HepG2 (cell line): ENCODE measurements at regions of chr20 and their contacts with region 1.

Region 1: DNA sequence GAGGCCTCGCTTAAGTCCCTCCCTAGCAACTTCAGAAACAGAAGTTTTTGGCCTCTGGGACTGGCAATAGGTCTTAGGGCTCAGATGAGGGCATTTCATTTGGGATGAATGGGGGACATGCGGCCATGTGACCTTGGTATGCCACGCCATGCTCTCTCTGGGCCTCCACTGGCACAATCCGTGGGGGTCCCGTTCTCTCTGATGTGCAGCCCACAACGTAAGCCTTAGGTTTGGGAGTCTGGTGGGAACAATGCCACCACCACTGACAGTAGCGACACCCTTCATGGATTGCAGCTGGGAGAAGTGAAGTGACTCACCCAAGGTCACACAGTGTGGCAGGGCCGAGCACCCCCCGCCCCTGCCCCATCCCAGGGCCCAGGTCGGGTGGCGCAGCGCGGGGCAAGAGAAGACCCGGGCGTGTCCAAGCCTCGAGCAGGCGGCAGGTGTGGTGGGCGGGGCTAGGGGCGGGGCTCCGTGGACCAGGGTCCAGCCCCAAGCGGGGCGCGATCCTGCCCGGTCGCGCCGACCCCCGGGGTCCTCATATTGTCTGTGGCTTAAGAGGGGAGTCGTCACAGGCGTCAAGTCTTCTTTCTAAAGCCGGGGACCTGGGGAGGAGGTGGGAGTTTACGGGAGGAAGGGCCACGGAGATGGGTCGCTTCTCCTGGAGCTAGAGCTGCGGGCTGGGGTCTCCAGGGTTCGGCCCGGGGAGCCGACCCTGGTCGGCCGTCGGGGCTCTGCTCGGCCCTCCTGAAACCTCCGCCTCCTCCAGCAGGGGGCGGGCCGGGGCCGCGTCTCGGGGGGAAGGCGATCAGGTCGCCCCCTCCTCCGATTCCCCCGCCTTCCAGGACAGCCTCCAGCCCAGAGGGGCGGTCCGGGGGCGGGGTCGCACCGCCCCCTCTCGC is 698 bp upstream of the CEBPB start:
- DNase-seq: peak; percentile 90
- ATAC-seq: peak; percentile 53
- H3K4me3 ChIP-seq: peak overlapping the region; percentile 80 to 99 (median 95)
- H3K27ac ChIP-seq: peak overlapping the region; percentile 79
- H3K4me1 ChIP-seq: peaks cover 66% of the 10 kb centered on the region
- H3K27me3 ChIP-seq: no peaks in the 10 kb centered on the region; a peak in 1 of 5 replicates
- CTCF ChIP-seq: peak; percentile 96
- EP300 ChIP-seq: peak in 1 of 2 experiments; percentile 31; a peak in 1 of 4 replicates
- POLR2A ChIP-seq: no peak
- RAD21 ChIP-seq: peak; percentile 96

Region 2: DNA sequence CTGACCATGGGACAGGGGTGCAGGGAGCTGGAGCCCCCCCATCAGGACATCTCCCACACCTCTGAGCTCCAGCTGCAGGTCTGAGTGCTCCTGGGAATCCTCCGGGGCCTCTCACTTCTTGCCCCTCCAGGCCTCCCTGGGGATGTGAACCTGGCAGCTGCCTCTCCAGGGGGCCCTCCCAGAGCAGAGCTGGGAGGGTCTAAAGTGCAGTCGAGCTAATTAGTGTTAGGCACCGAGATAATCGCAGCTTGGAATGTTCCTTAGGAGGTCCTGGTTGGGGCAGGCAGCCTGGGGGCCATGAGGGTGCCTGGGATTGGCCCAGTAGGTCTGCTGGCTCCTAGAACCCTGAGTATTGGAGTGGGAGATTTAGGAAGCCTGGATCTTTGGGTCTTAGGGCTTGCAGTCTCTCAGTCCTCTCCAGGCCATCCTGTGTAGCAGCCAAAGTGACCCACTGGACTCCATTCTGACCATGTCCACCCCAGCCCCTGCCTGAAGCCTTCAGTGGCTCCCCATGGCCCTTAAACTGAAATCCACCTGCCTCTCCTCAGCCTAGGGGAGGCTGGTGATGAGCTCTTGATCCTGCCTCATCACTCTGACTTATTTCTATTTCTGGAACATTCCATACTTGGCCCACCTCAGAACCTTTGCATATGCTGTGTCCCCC is 26.7 kb after region 1 on chr20:
- CTCF ChIA-PET with region 1: no interaction called
- POLR2A ChIA-PET with region 1: interaction called, 10 read pairs
- in situ Hi-C with region 1: no loop called
- intact Hi-C with region 1: no loop called
- DNase-seq: peak; percentile 63
- ATAC-seq: peak; percentile 59
- H3K4me3 ChIP-seq: peak overlapping the region in 2 of 3 experiments; percentile 7 to 63; a peak in 3 of 6 replicates
- H3K27ac ChIP-seq: no peak overlapping the region
- H3K4me1 ChIP-seq: peaks cover 71% of the 10 kb centered on the region
- H3K27me3 ChIP-seq: peaks cover 1 to 47% of the 10 kb centered on the region in 2 experiments
- CTCF ChIP-seq: no peak
- EP300 ChIP-seq: peak in 1 of 2 experiments; percentile 39; a peak in 1 of 4 replicates
- POLR2A ChIP-seq: no peak
- RAD21 ChIP-seq: no peak

Region 3: DNA sequence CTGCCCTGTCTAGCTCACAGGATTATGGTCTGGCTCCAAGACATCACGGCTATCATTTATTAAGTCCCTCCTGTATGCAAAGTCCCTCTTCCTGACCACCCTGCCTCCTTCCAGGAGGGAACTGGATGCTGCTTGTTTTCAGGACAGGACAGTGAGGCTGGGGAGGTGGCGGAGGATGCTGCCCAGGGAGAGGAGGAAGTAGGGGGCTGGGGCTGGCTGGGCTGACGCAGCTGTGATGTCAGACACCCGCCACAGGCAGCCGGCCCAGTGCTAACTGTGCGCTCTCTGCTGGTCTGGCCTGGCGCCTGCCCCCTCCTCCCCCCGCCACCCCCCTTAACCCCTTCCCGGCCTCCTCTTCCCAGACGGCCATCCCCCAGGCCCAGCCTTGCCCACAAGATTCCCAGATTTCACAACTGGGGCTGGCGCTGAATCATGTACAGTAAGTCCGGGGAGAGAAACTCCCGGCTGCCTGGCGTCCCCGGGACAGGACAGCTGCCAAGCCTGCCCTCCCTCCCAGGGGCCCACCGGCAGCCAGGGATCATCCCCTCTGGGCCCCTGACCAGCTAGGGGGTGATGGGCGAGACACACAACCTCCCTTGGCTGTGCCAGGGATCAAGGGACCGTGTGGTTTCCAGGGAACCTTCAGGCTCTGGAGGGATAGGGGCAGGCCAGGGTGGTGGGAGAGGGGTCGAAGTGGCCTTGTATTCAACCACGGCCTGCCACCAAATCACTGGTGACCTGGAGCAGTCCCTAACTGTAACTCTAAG is 118.8 kb after region 1 on chr20:
- CTCF ChIA-PET with region 1: no interaction called
- POLR2A ChIA-PET with region 1: interaction called, 91 read pairs
- in situ Hi-C with region 1: no loop called
- intact Hi-C with region 1: no loop called
- DNase-seq: peak; percentile 96
- ATAC-seq: peak; percentile 15
- H3K4me3 ChIP-seq: peak overlapping the region; percentile 53 to 78 (median 61)
- H3K27ac ChIP-seq: peak overlapping the region; percentile 75
- H3K4me1 ChIP-seq: peaks cover 66% of the 10 kb centered on the region
- H3K27me3 ChIP-seq: no peaks in the 10 kb centered on the region
- CTCF ChIP-seq: peak; percentile 67
- EP300 ChIP-seq: peak in 1 of 2 experiments; percentile 62; a peak in 3 of 4 replicates
- POLR2A ChIP-seq: peak in 1 of 2 experiments; percentile 11; a peak in 2 of 4 replicates
- RAD21 ChIP-seq: peak; percentile 46

Region 4: DNA sequence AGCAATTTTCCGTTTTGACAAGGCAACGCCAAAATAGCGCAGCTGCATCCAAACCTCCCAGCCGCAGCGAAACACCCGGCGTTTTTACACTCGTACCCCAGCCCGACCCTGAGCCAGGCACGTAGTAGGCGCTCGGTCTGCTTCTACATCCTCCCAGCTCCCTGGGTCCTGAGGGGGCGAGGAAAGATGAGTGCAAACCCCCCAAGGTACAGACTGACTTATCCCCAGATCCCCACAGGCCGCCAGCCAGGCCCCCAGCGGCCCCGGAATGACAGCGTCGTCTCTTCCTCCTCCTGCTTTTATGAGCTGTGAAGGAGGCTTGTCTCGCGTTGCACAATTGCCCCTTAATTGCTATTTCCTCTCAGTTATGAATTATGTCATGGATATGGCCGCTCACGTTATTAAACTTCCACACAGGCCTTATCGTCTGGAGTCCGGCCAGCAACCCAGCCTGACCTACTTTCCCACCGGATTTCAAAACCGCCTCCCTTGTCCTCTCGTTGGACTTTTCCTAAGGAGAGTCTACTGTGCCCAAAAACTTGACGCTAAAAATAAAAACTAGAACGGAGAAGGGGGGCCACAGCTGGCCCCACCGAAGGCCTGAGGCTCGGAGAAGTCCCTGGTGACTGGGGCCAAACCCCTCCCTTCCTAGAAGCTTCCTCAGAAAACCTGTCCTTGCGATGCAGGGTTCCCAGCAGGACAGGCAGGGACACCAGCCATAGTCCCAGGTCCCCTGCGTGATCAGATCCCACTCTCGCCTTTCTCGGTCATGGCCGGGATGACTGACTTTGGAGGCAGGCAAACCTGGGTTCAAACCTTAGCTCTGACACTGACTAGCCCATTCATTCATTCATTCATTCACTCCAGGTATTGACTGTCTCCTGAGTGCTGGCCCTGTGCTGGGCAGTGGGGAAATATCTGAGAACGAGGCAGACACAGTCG is 189.4 kb after region 1 on chr20:
- CTCF ChIA-PET with region 1: interaction called, 13 read pairs
- POLR2A ChIA-PET with region 1: interaction called, 4 read pairs
- in situ Hi-C with region 1: no loop called
- intact Hi-C with region 1: no loop called
- DNase-seq: no peak
- ATAC-seq: no peak
- H3K4me3 ChIP-seq: peak overlapping the region in 1 of 3 experiments; percentile 12; a peak in 1 of 6 replicates
- H3K27ac ChIP-seq: peak overlapping the region; percentile 4
- H3K4me1 ChIP-seq: peaks cover 86% of the 10 kb centered on the region
- H3K27me3 ChIP-seq: no peaks in the 10 kb centered on the region
- CTCF ChIP-seq: no peak
- EP300 ChIP-seq: no peak
- POLR2A ChIP-seq: no peak
- RAD21 ChIP-seq: no peak

Region 5: DNA sequence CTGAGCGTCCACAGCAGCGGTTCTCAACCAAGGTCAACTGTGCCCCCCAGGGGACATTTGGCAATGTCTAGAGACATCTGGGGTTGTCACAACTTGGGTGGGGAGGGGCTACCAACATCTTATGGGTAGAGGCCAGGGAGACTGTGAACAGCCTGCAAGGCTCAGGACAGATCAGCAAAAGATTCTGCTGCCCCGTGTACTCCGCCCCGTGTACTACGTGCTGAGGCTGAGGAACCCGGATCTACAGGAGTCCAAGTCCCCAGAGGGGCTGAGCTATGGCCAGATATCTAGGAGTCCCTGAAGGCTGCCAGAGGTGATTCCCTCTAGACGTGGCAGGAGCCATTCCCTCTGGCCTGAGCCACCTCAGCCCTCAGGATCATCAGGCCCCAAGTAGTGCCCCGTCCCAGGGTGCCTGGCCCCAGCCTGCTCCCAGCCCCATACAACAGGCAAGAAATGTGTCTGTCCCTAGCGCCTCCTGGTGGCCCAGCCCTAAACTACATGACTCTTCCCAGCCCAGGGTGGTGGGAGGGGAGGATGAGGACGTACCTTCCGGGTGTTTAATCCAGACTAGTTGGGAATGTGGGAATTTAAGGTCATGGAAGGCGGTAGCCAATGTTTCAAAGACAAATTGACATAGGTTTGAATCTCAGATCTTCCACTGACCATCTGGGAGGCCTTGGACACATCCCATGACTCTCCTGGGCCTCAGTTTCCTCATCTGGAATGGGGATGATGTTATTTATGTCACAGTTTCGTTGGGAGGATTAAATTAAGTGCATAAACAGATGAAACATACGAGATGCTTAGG is 270.7 kb after region 1 on chr20:
- CTCF ChIA-PET with region 1: interaction called, 138 read pairs
- POLR2A ChIA-PET with region 1: interaction called, 98 read pairs
- in situ Hi-C with region 1: loop called (anchors 5 kb)
- intact Hi-C with region 1: loop called (anchors 1 kb)
- DNase-seq: peak; percentile 91
- ATAC-seq: peak; percentile 85
- H3K4me3 ChIP-seq: peak overlapping the region; percentile 15 to 64 (median 35); a peak in 5 of 6 replicates
- H3K27ac ChIP-seq: peak overlapping the region; percentile 45
- H3K4me1 ChIP-seq: peaks cover 89% of the 10 kb centered on the region
- H3K27me3 ChIP-seq: no peaks in the 10 kb centered on the region
- CTCF ChIP-seq: peak; percentile 100
- EP300 ChIP-seq: peak in 1 of 2 experiments; percentile 60; a peak in 3 of 4 replicates
- POLR2A ChIP-seq: peak in 1 of 2 experiments; percentile 28; a peak in 1 of 4 replicates
- RAD21 ChIP-seq: peak; percentile 100